ENCODE measurements at regions of chr5 and their contacts with region 1.

Region 1: GRCh38 chr5:134648425-134649162 is at the start of gene SEC24A:
- DNase-seq: peak; percentile 75 to 98 (median 88)
- ATAC-seq: peak; percentile 77
- H3K4me3 ChIP-seq: peak within 1 kb of the TSS; percentile 74 to 98
- H3K4me3 Mint-ChIP-seq: peak within 1 kb of the TSS; percentile 96
- H3K27ac ChIP-seq: peak within 1 kb of the TSS; percentile 83 to 100
- H3K27ac Mint-ChIP-seq: peak within 1 kb of the TSS; percentile 99
- H3K4me1 ChIP-seq: peaks cover 12% of the 10 kb centered on the region
- H3K4me1 Mint-ChIP-seq: peaks cover 30% of the 10 kb centered on the region
- H3K27me3 ChIP-seq: no peaks in the 10 kb centered on the region
- H3K27me3 Mint-ChIP-seq: no peaks in the 10 kb centered on the region
- CTCF ChIP-seq: no peak
- total RNA-seq, gene SEC24A: 14.4 to 14.5 TPM

Region 2: GRCh38 chr5:132859889-132860437 is 1788.6 kb before region 1 on chr5:
- CTCF ChIA-PET with region 1: no interaction called
- POLR2A ChIA-PET with region 1: no interaction called
- intact Hi-C with region 1: loop called in 1 of 2 experiments (anchors 5 kb)
- DNase-seq: no peak
- ATAC-seq: no peak
- H3K4me3 ChIP-seq: no peak overlapping the region
- H3K4me3 Mint-ChIP-seq: no peak overlapping the region
- H3K27ac ChIP-seq: no peak overlapping the region
- H3K27ac Mint-ChIP-seq: no peak overlapping the region
- H3K4me1 ChIP-seq: no peaks in the 10 kb centered on the region
- H3K4me1 Mint-ChIP-seq: no peaks in the 10 kb centered on the region
- H3K27me3 ChIP-seq: no peaks in the 10 kb centered on the region
- H3K27me3 Mint-ChIP-seq: peaks cover 5% of the 10 kb centered on the region
- CTCF ChIP-seq: no peak

Region 3: DNA sequence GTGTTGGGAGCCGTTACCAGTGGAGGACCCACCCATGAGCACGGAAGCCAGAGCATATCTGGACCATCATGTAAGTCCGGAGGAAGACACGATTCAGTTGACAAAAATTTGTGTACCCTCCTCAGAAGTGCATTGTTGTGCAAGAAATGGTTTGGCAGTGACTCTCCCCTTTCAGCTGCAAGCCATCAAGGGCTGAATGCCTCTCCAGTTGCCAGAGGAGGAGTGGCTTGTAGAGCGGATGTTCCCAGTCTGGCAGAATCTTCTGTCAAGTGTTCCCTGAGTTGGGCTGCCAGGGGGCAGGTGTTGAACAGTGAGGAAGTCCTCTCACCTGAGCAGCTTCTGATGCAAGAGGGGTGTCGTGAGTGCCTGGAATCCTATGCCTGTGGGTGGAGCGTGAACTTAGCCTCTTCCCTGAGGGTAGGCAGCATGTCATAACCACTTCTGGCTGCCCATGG is 209.4 kb before region 1 on chr5:
- CTCF ChIA-PET with region 1: no interaction called
- POLR2A ChIA-PET with region 1: no interaction called
- intact Hi-C with region 1: no loop called
- DNase-seq: no peak
- ATAC-seq: no peak
- H3K4me3 ChIP-seq: no peak overlapping the region
- H3K4me3 Mint-ChIP-seq: no peak overlapping the region
- H3K27ac ChIP-seq: no peak overlapping the region
- H3K27ac Mint-ChIP-seq: no peak overlapping the region
- H3K4me1 ChIP-seq: peaks cover 12% of the 10 kb centered on the region
- H3K4me1 Mint-ChIP-seq: peaks cover 16% of the 10 kb centered on the region
- H3K27me3 ChIP-seq: no peaks in the 10 kb centered on the region
- H3K27me3 Mint-ChIP-seq: no peaks in the 10 kb centered on the region
- CTCF ChIP-seq: no peak

Region 4: DNA sequence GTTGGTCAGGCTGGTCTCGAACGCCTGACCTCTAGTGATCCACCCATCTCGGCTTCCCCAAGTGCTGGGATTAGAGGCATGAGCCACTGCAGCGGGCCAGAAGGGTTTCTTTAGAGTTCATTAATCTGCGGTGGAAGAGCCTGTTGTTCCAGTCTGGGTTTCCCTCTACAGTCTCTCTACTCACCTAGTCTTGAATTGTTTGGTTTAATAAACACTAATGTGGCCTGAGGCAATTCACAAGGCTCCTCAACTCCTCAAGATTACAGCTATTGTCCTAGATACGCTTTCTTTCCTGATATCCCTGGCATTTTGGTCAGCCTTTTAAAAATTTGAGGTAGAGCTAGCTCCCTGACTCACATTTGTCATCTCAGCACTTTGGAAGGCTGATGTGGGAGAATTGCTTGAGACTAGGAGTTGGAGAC is 11.4 kb before region 1 on chr5:
- CTCF ChIA-PET with region 1: interaction called, 5 read pairs
- POLR2A ChIA-PET with region 1: interaction called, 3 read pairs
- intact Hi-C with region 1: loop called (anchors 1 kb)
- DNase-seq: no peak
- ATAC-seq: no peak
- H3K4me3 ChIP-seq: no peak overlapping the region
- H3K4me3 Mint-ChIP-seq: no peak overlapping the region
- H3K27ac ChIP-seq: no peak overlapping the region
- H3K27ac Mint-ChIP-seq: no peak overlapping the region
- H3K4me1 ChIP-seq: no peaks in the 10 kb centered on the region
- H3K4me1 Mint-ChIP-seq: peaks cover under 1% of the 10 kb centered on the region
- H3K27me3 ChIP-seq: no peaks in the 10 kb centered on the region
- H3K27me3 Mint-ChIP-seq: no peaks in the 10 kb centered on the region
- CTCF ChIP-seq: no peak

Region 5: GRCh38 chr5:134845852-134846640 is 197.5 kb after region 1 on chr5 and contains the start of gene C5orf24:
- CTCF ChIA-PET with region 1: no interaction called
- POLR2A ChIA-PET with region 1: no interaction called
- intact Hi-C with region 1: loop called (anchors 5 to 10 kb)
- DNase-seq: peak; percentile 82 to 98 (median 90)
- ATAC-seq: peak; percentile 92
- H3K4me3 ChIP-seq: peak within 1 kb of the TSS; percentile 85 to 94
- H3K4me3 Mint-ChIP-seq: peak within 1 kb of the TSS; percentile 87
- H3K27ac ChIP-seq: peak within 1 kb of the TSS; percentile 84 to 91
- H3K27ac Mint-ChIP-seq: peak within 1 kb of the TSS; percentile 94
- H3K4me1 ChIP-seq: peaks cover 18% of the 10 kb centered on the region
- H3K4me1 Mint-ChIP-seq: peaks cover 34% of the 10 kb centered on the region
- H3K27me3 ChIP-seq: no peaks in the 10 kb centered on the region
- H3K27me3 Mint-ChIP-seq: no peaks in the 10 kb centered on the region
- CTCF ChIP-seq: no peak
- total RNA-seq, gene C5orf24: 29.9 to 31.0 TPM

Region 6: GRCh38 chr5:135635451-135635850 is 986.9 kb after region 1 on chr5:
- CTCF ChIA-PET with region 1: no interaction called
- POLR2A ChIA-PET with region 1: no interaction called
- intact Hi-C with region 1: no loop called
- DNase-seq: no peak
- ATAC-seq: no peak
- H3K4me3 ChIP-seq: no peak overlapping the region
- H3K4me3 Mint-ChIP-seq: no peak overlapping the region
- H3K27ac ChIP-seq: no peak overlapping the region
- H3K27ac Mint-ChIP-seq: no peak overlapping the region
- H3K4me1 ChIP-seq: no peaks in the 10 kb centered on the region
- H3K4me1 Mint-ChIP-seq: no peaks in the 10 kb centered on the region
- H3K27me3 ChIP-seq: no peaks in the 10 kb centered on the region
- H3K27me3 Mint-ChIP-seq: peaks cover 5% of the 10 kb centered on the region
- CTCF ChIP-seq: no peak